ENCODE measurements at regions of chr12 and their contacts with region 1.

Region 1: GRCh38 chr12:7995266-7995963 is 37.1 kb upstream of the FOXJ2 start:
- DNase-seq: peak; percentile 71
- CTCF ChIP-seq: peak; percentile 66

Region 2: GRCh38 chr12:7403466-7403865 is 591.9 kb before region 1 on chr12:
- in situ Hi-C with region 1: no loop called
- DNase-seq: no peak
- CTCF ChIP-seq: no peak

Region 3: GRCh38 chr12:7859552-7859951 is 135.9 kb before region 1 on chr12:
- in situ Hi-C with region 1: loop called (anchors 10 kb)
- DNase-seq: no peak
- CTCF ChIP-seq: no peak

Region 4: GRCh38 chr12:7933255-7933729 is 62.1 kb before region 1 on chr12:
- in situ Hi-C with region 1: loop called (anchors 10 kb)
- DNase-seq: peak; percentile 86
- CTCF ChIP-seq: peak; percentile 47

Measured in GM13977 (cell line).